HCT116 (cell line): ENCODE measurements at regions of chr22 and their contacts with region 1.

Region 1: GRCh38 chr22:20783844-20784723 is 10.2 kb downstream of the SERPIND1 start:
- DNase-seq: peak; percentile 34
- ATAC-seq: peak; percentile 95
- H3K4me3 ChIP-seq: no peak overlapping the region
- H3K27ac ChIP-seq: no peak overlapping the region
- H3K4me1 ChIP-seq: peaks cover 0 to 1% of the 10 kb centered on the region in 2 experiments; a peak in 1 of 4 replicates
- H3K27me3 ChIP-seq: no peaks in the 10 kb centered on the region
- CTCF ChIP-seq: peak; percentile 51 to 84 (median 84); a peak in 5 of 6 replicates
- POLR2A ChIP-seq: no peak
- RAD21 ChIP-seq: peak; percentile 61

Region 2: DNA sequence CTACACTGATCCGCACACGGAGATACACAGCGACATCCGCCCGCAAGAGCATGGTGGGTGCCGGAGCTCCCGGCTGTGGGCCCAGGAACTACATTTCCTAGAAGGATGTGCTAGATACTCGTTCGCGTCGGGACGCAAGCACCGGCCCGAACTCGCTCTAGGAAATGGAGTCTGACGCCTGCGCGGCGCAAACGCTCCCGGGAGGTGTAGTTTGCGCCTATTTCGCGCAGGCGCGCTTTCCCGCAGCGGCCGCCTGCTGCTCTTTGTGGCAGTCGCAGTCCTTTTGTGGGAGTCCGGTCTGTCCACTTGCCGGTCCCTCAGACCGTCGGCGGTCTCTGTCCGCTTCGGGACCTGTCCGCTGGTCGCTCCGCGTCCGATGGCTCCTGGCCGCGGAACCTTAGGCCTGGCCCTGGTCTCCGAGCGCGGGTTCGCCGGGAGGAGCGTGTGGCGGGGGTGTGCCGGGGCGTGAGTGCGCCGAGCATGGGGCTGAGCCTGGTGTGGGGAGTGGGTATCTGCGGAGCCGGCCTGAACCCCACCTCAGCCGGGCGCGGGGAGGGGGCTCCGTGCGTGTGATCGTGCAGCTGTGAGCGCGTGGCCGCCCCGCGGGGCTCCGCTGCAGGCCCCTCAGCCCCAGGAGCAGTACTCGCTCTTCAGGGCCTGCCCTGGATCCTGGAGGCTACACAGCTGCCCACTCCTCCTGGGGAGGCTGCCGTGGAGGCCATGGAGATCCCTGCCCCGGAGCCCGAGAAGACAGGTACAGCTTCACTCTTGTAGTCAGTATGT is 390.0 kb before region 1 on chr22 and contains the start of gene ZNF74:
- CTCF ChIA-PET with region 1: no interaction called
- POLR2A ChIA-PET with region 1: no interaction called
- RAD21 ChIA-PET with region 1: no interaction called
- intact Hi-C with region 1: no loop called
- DNase-seq: peak; percentile 77
- ATAC-seq: peak; percentile 94
- H3K4me3 ChIP-seq: peak within 1 kb of the TSS; percentile 76 to 93
- H3K27ac ChIP-seq: peak within 1 kb of the TSS; percentile 76
- H3K4me1 ChIP-seq: peaks cover 9 to 22% of the 10 kb centered on the region in 2 experiments
- H3K27me3 ChIP-seq: no peaks in the 10 kb centered on the region
- CTCF ChIP-seq: no peak
- POLR2A ChIP-seq: peak; percentile 92
- RAD21 ChIP-seq: no peak
- total RNA-seq, gene ZNF74: 15.4 TPM

Region 3: DNA sequence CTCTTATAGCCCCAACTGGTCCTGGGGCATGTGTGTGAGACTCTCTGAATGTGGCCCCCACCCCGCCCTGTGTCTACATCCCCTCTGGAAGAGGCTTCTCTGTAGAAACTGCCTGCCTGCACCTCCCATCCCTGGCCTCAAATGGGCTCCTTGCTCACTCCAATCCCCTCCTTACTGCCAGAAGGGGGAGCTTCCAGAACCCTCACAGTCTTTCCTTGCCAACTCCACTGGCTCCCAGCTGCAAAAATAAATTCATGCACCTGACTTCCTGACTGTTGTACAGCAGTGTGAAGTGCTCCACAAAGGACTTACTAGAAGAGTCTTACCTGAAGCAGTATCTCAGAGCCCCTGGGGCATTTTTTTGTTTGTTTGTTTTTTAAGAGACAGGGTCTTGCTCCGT is 25.4 kb before region 1 on chr22:
- CTCF ChIA-PET with region 1: no interaction called
- POLR2A ChIA-PET with region 1: no interaction called
- RAD21 ChIA-PET with region 1: no interaction called
- intact Hi-C with region 1: loop called (anchors 2 kb)
- DNase-seq: no peak
- ATAC-seq: peak; percentile 73
- H3K4me3 ChIP-seq: no peak overlapping the region
- H3K27ac ChIP-seq: no peak overlapping the region
- H3K4me1 ChIP-seq: peaks cover 0 to 2% of the 10 kb centered on the region in 2 experiments; a peak in 1 of 4 replicates
- H3K27me3 ChIP-seq: no peaks in the 10 kb centered on the region
- CTCF ChIP-seq: peak in 1 of 3 experiments; percentile 34; a peak in 1 of 6 replicates
- POLR2A ChIP-seq: no peak
- RAD21 ChIP-seq: 0 out of 2 replicates have a peak, but pooled peaks have one; percentile 3

Region 4: DNA sequence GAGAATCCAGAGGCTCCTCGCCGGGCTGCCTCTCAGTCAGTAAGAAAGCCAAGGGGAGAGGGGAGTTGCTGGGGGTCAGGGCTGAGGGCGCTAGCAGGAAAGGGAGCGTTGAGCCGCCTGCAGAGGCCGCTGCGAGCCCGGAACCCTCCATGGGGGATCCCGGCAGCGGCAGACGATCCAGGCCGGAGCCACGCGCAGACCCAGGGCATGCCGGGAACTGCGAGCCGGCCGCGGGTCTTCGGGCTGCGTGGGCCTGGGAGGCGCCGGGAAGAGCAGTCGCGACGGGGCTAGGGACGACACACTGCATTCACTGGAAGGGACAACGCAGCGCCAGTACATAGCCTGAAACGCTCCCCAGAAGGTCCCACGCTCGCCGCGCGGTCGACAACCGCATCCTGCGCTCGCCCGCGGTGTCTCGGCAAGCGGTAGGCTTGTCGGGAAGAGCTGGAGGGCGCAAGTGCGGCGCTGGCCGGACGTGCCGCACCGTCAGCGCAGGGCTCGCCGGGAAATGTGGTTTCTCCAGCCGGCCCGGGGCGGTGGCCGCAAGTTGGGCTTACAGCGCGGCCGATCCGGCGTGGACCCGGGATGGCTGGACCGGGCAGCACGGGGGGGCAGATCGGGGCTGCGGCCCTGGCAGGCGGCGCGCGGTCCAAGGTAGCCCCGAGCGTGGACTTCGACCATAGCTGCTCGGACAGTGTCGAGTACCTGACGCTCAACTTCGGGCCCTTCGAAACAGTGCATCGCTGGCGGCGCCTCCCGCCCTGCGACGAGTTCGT is 197.9 kb after region 1 on chr22 and contains the start of gene LZTR1:
- CTCF ChIA-PET with region 1: no interaction called
- POLR2A ChIA-PET with region 1: no interaction called
- RAD21 ChIA-PET with region 1: no interaction called
- intact Hi-C with region 1: no loop called
- DNase-seq: peak; percentile 50
- ATAC-seq: peak; percentile 95
- H3K4me3 ChIP-seq: peak within 1 kb of the TSS; percentile 77 to 89
- H3K27ac ChIP-seq: peak within 1 kb of the TSS; percentile 80
- H3K4me1 ChIP-seq: peaks cover 6 to 18% of the 10 kb centered on the region in 2 experiments; a peak in 2 of 4 replicates
- H3K27me3 ChIP-seq: no peaks in the 10 kb centered on the region
- CTCF ChIP-seq: peak; percentile 48 to 68 (median 56); a peak in 5 of 6 replicates
- POLR2A ChIP-seq: peak; percentile 97
- RAD21 ChIP-seq: peak; percentile 39
- total RNA-seq, gene LZTR1: 56.5 TPM